ENCODE measurements at regions of chr3 and their contacts with region 1.

Region 1: DNA sequence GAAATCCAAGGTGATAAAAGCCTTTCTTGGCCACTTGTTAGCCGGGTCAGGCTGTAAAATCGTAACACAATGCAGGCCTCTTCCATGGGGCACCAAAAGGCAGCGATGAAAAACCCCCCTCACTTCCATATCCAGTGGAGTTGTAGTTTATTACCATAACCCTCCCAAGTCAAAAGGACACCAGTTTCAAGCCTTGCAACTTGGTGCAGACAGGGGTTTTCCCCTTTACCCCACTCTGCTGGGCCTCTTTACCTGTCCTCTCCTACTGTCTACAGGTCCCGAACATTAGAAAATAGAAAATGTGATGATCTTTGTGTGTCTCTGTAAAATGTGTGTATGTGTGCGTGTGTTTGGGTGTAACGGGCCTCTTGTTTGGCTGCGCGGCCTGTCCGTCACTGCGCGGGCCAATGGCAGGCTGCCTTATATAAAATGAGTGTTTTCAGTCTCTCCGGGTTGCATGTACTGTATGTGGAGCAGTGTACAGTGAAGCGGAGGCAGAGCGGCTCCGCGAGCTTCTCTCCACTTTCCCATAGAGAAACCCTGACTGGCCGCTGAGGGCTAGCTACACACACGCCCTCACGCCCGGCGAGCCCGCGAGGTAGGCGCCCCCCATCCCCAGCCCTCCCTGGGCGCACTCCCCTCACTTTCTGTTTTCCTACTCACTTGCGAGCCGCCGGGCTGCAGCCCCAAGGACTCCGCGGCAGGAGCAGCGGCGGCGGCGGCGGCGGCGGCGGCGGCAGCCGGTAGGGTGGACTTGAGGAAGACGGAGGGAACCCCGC is at the start of gene BBX:
- DNase-seq: peak; percentile 92
- H3K4me3 ChIP-seq: peak within 1 kb of the TSS; percentile 89
- H3K27ac ChIP-seq: peak within 1 kb of the TSS; percentile 82
- H3K4me1 ChIP-seq: peaks cover 40% of the 10 kb centered on the region
- CTCF ChIP-seq: no peak
- total RNA-seq, gene BBX: 20.2 and 27.0 TPM in 2 replicates

Region 2: GRCh38 chr3:107142786-107143575 is 379.7 kb before region 1 on chr3:
- CTCF ChIA-PET with region 1: no interaction called
- POLR2A ChIA-PET with region 1: no interaction called
- intact Hi-C with region 1: loop called (anchors 5 kb)
- DNase-seq: peak; percentile 89
- H3K4me3 ChIP-seq: peak overlapping the region; percentile 7
- H3K27ac ChIP-seq: peak overlapping the region; percentile 82
- H3K4me1 ChIP-seq: peaks cover 28% of the 10 kb centered on the region
- CTCF ChIP-seq: no peak

Region 3: DNA sequence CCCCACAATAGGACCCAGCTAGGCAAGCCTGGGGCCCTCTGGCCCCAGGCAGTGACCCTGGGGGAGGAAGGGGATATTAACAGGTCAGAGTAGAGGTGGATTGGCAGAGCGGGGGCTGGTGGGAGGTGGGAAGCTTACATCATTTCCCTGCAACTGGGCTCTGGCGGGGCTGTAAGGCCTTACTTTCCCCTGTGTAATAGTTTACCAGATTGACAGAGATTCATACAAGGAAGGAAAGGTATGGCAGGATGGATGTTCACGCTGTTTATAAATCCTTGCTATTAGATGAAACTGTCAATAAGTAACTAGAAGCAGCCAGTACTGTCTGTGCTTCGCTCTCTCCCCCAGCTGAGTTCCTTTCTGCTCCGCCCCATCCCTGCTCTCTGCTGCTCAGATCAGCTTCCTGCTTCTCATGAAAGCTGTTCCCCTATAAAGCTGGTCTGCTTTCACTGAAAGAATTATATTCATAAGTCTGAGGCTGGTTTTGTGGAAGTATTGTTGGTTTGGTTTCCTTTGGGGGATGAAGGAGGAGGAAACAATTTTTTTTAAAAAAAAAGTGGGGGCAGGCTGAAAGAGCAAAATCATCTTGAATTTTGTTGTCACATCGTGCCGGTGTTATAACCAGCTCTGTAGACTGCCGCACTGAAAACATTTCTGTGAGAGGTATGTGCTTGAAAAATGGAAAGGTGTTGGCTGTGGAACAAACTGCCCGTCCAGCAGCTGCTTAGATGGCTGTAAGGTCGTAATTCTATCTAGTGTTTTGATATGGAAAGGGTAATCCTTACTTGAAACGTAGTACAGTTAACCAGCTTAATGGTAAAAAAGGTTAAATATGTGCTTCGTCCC is 76.5 kb after region 1 on chr3:
- CTCF ChIA-PET with region 1: no interaction called
- POLR2A ChIA-PET with region 1: no interaction called
- intact Hi-C with region 1: loop called (anchors 5 kb)
- DNase-seq: peak; percentile 68
- H3K4me3 ChIP-seq: peak overlapping the region; percentile 65
- H3K27ac ChIP-seq: peak overlapping the region; percentile 49
- H3K4me1 ChIP-seq: peaks cover 43% of the 10 kb centered on the region
- CTCF ChIP-seq: no peak

Region 4: DNA sequence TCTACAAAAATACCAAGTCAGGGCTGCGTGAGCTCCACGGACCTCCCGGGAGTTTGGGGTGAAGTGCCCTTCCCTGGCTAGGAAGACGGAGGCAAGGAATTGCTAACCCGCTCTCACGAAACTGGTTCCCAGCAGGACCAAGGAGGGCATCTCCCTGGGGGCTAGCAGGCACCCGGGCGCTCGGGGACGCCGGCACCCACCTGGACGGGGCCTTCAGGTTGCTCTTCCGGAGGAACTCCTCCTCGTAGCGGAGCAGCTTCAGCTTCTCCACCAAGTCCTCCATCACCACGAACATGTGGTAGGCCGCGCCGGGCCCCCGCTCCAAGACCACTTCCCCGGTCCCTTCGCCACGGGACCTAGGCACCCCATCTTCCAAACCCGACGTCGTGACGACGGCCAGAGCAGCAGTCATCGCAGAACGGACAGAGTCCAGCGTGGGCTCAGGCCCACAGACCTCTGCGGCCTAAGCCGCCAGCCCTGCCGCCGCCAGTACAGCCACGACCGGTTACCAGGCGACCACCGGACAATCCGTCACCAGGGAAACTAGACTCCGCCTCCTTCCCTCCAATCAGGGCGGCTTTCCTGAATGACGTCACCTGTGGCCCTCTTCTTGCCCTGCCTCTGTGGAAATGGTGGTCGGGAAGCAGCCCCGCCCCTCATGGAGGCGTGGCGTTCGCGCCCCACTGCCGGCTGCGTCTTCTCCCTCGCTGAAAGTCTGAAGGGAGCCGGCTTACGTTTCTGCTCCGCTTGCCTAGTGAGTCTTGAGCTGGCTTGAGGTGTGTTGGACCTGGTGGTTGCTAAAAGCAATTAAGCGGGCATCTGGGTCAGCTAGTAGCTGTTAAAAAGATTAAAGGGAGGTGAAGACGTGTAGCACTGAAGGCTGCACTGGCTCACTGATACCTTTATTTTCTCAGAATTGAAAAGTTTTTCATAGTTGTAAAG is 699.5 kb after region 1 on chr3 and contains the start of gene IFT57:
- CTCF ChIA-PET with region 1: no interaction called
- POLR2A ChIA-PET with region 1: interaction called, 6 read pairs
- intact Hi-C with region 1: loop called (anchors 5 kb)
- DNase-seq: peak; percentile 98
- H3K4me3 ChIP-seq: peak within 1 kb of the TSS; percentile 92
- H3K27ac ChIP-seq: peak within 1 kb of the TSS; percentile 75
- H3K4me1 ChIP-seq: peaks cover 42% of the 10 kb centered on the region
- CTCF ChIP-seq: no peak
- total RNA-seq, gene IFT57: 61.9 and 68.2 TPM in 2 replicates